Common myeloid progenitor, CD34-positive (primary cell): ENCODE measurements at regions of chr16 and their contacts with region 1.

Region 1: GRCh38 chr16:29664091-29664921 is 1.3 kb downstream of the SPN start:
- DNase-seq: peak; percentile 69 to 84 (median 75)
- H3K4me3 ChIP-seq: peak overlapping the region; percentile 61 to 95 (median 76)
- H3K27ac ChIP-seq: peak overlapping the region; percentile 93 to 94
- H3K4me1 ChIP-seq: peaks cover 13 to 86% (median 65%) of the 10 kb centered on the region in 4 experiments
- H3K27me3 ChIP-seq: no peaks in the 10 kb centered on the region

Region 2: DNA sequence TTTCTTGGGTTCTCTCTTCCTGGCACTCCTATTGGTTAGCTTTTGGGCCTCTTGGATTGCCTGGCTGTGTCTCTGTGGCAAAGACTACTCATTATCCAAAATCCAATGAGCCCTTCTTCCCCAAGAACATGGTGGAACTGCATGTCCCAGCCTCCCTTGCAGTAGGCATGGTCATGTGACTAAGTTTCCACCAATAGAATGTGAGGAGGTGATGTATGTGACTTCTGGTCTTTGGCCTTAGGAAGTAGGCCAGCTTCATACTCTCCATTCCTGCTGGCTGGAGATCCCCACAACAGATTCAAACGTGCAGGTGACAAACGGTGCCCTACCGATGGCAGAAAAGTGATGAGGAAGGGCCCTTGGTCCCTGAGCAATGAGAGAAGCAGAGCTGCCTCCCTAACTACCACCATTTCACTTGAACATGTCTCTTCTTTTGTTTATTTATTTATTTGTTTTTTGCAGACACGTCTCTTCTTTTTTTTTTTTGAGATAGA is 18.6 kb before region 1 on chr16:
- CTCF ChIA-PET with region 1: interaction called, 21 read pairs
- POLR2A ChIA-PET with region 1: interaction called, 11 read pairs
- DNase-seq: peak; percentile 71 to 85 (median 82)
- H3K4me3 ChIP-seq: peak overlapping the region in 2 of 7 experiments; percentile 3 to 11
- H3K27ac ChIP-seq: peak overlapping the region in 1 of 2 experiments; percentile 65
- H3K4me1 ChIP-seq: peaks cover 9 to 58% (median 38%) of the 10 kb centered on the region in 4 experiments
- H3K27me3 ChIP-seq: no peaks in the 10 kb centered on the region

Region 3: GRCh38 chr16:29653471-29653870 is 10.8 kb before region 1 on chr16:
- CTCF ChIA-PET with region 1: interaction called, 14 read pairs
- POLR2A ChIA-PET with region 1: interaction called, 19 read pairs
- DNase-seq: peak; percentile 58 to 77 (median 77)
- H3K4me3 ChIP-seq: peak overlapping the region in 1 of 7 experiments; percentile 38
- H3K27ac ChIP-seq: peak overlapping the region; percentile 5 to 22
- H3K4me1 ChIP-seq: peaks cover 10 to 52% (median 30%) of the 10 kb centered on the region in 4 experiments
- H3K27me3 ChIP-seq: no peaks in the 10 kb centered on the region

Region 4: GRCh38 chr16:29678691-29679267 is 14.5 kb after region 1 on chr16 and contains the start of gene QPRT:
- CTCF ChIA-PET with region 1: interaction called, 12 read pairs
- POLR2A ChIA-PET with region 1: interaction called, 22 read pairs
- DNase-seq: peak in 2 of 3 donors; percentile 43 to 66
- H3K4me3 ChIP-seq: peak within 1 kb of the TSS in 5 of 7 experiments; percentile 32 to 67 (median 58)
- H3K27ac ChIP-seq: peak within 1 kb of the TSS in 1 of 2 experiments; percentile 81
- H3K4me1 ChIP-seq: peaks cover 9 to 54% (median 47%) of the 10 kb centered on the region in 4 experiments
- H3K27me3 ChIP-seq: no peaks in the 10 kb centered on the region

Region 5: DNA sequence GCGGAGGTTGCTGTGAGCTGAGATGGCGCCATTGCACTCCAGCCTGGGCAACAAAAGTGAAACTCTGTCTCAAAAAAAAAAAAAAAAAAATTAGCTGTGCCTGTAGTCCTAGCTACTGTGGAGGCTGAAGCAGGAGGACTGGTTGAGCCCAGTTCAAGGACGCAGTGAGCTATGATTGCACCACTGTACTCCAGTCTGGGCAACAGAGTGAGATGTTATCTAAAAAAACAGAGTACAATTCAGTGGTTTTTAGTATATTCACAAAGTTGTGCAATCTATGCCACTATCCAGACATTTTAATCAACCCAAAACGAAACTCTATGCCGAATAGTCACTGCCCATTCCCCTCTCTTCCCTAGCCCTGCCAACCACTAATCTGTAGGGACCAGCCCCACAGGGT is 56.4 kb after region 1 on chr16:
- CTCF ChIA-PET with region 1: no interaction called
- POLR2A ChIA-PET with region 1: no interaction called
- DNase-seq: peak in 2 of 3 donors; percentile 51 to 61
- H3K4me3 ChIP-seq: no peak overlapping the region
- H3K27ac ChIP-seq: no peak overlapping the region
- H3K4me1 ChIP-seq: peaks cover 0 to 5% (median 1%) of the 10 kb centered on the region in 4 experiments
- H3K27me3 ChIP-seq: no peaks in the 10 kb centered on the region

Region 6: GRCh38 chr16:29738514-29738913 is 74.2 kb after region 1 on chr16:
- CTCF ChIA-PET with region 1: no interaction called
- POLR2A ChIA-PET with region 1: no interaction called
- DNase-seq: peak in 2 of 3 donors; percentile 52 to 60
- H3K4me3 ChIP-seq: no peak overlapping the region
- H3K27ac ChIP-seq: no peak overlapping the region
- H3K4me1 ChIP-seq: peaks cover 0 to 30% (median 16%) of the 10 kb centered on the region in 4 experiments
- H3K27me3 ChIP-seq: no peaks in the 10 kb centered on the region

Region 7: DNA sequence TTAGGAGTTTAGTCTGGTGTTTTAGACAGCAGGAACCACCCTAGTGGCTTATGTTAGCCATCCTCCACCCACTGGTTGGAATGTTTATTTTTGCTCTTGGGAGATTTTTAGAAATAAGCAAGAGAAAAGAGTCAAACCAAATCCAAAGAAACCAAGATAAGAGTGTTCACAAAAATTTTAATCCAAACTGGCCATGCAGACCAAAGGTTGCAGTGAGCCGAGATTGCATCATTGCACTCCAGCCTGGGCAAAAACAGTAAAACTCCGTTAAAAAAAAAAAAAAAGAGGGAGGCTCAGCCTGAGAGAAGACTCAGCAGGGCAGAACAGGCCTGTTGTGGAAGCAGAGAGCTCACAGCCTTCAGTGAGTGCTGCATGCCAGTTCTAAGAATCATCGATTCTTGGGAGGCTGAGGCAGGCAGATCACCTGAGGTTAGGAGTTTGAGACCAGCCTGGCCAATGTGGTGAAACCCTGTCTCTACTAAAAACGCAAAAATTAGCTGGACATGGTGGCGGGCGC is 93.7 kb after region 1 on chr16:
- CTCF ChIA-PET with region 1: no interaction called
- POLR2A ChIA-PET with region 1: no interaction called
- DNase-seq: no peak
- H3K4me3 ChIP-seq: no peak overlapping the region
- H3K27ac ChIP-seq: no peak overlapping the region
- H3K4me1 ChIP-seq: no peaks in the 10 kb centered on the region
- H3K27me3 ChIP-seq: no peaks in the 10 kb centered on the region

Region 8: GRCh38 chr16:29794231-29794710 is 130.0 kb after region 1 on chr16:
- CTCF ChIA-PET with region 1: no interaction called
- POLR2A ChIA-PET with region 1: no interaction called
- DNase-seq: no peak
- H3K4me3 ChIP-seq: no peak overlapping the region
- H3K27ac ChIP-seq: peak overlapping the region in 1 of 2 experiments; percentile 30
- H3K4me1 ChIP-seq: peaks cover 12 to 33% (median 25%) of the 10 kb centered on the region in 4 experiments
- H3K27me3 ChIP-seq: no peaks in the 10 kb centered on the region